Natural killer cell (primary cell): ENCODE measurements at regions of chr7 and their contacts with region 1.

Region 1: DNA sequence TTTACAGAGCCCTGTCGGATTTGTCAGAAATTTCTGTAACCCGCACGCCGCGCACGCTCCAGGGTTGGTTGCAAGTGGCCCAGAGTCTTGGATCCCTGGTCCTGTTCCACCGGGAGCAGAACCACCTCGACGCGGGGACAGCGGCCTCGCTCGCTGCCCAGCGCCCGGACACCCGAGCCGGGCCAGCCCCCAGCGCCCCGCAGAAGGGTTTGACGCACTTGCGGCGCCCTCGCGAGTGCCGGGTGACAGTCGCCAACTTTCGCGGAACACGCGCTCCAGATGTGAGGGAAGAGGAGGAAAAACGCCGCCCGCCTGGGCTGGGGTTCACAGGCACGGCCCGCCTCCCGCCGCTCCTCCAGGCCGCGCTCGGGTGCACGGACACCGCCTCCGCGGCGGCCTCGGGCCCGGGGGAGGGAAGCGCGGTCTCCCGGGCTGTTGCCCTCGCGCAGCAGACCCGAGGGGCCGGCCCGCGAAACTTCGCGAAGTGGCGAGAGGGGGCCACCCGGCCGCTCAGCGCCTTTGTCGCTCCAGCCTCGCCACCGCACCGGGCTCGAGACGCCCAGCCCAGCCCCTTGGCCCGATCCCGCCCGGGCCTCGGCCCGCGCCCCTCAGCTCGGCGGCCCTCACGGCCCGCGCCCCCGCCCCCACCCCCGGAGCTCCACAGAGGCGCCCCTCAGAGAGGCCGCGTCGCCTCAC is 514 bp downstream of the RNF216 start:
- DNase-seq: peak in 1 of 2 donors; percentile 54
- ATAC-seq: peak; percentile 31 to 49 (median 40)
- H3K4me3 ChIP-seq: peak overlapping the region; percentile 55
- H3K4me3 Mint-ChIP-seq: peak overlapping the region; percentile 92
- H3K27ac ChIP-seq: peak overlapping the region; percentile 79
- H3K27ac Mint-ChIP-seq: peak overlapping the region; percentile 80 to 93
- H3K4me1 ChIP-seq: peaks cover 31% of the 10 kb centered on the region
- H3K4me1 Mint-ChIP-seq: peaks cover 29 to 33% of the 10 kb centered on the region in 2 donors
- H3K27me3 ChIP-seq: no peaks in the 10 kb centered on the region
- H3K27me3 Mint-ChIP-seq: no peaks in the 10 kb centered on the region
- CTCF ChIP-seq: no peak

Region 2: DNA sequence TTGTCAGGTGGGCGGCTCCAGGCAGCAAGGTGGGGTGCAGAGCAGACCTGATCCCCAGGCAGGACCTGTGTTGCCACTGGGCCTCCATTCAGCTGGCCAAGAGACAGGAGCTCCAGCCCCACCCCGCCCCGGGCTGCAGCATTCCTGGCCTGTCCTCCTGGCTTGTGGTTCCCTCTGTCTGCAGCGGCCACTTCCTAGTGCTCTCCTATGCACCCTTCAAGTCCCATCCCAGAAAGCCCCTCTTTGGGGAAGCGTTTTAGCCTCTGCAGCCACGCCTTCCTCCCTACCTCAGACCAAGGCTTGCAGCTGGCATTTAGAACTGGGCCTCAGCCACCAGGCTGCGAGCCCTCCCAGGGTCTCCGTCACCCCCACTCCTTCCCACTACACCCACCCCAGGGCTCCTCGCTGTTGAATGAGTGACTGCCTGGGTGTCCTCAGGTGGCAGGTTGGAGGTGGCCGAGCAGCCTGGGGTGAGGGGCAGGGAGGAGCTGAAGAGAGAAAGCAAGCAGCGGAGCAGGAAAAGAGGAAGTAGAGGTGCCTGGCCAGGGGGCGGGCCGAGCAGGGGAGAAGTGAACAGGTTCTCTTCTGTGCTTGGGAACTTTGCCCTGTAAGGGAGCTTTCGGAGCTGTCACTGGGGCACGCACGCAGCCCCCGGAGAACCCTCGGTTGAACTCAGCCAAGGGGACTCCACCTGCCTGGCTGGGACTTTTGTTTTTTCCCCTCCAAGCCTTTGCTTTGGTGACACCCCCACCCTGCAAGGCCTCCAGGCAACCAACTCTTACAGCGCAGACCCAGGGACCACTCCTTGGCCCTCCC is 248.2 kb before region 1 on chr7:
- intact Hi-C with region 1: no loop called
- DNase-seq: peak in 1 of 2 donors; percentile 69
- ATAC-seq: no peak
- H3K4me3 ChIP-seq: peak overlapping the region; percentile 83
- H3K4me3 Mint-ChIP-seq: peak overlapping the region; percentile 97
- H3K27ac ChIP-seq: peak overlapping the region; percentile 78
- H3K27ac Mint-ChIP-seq: peak overlapping the region; percentile 95
- H3K4me1 ChIP-seq: peaks cover 47% of the 10 kb centered on the region
- H3K4me1 Mint-ChIP-seq: peaks cover 36 to 46% of the 10 kb centered on the region in 2 donors
- H3K27me3 ChIP-seq: no peaks in the 10 kb centered on the region
- H3K27me3 Mint-ChIP-seq: no peaks in the 10 kb centered on the region
- CTCF ChIP-seq: no peak

Region 3: DNA sequence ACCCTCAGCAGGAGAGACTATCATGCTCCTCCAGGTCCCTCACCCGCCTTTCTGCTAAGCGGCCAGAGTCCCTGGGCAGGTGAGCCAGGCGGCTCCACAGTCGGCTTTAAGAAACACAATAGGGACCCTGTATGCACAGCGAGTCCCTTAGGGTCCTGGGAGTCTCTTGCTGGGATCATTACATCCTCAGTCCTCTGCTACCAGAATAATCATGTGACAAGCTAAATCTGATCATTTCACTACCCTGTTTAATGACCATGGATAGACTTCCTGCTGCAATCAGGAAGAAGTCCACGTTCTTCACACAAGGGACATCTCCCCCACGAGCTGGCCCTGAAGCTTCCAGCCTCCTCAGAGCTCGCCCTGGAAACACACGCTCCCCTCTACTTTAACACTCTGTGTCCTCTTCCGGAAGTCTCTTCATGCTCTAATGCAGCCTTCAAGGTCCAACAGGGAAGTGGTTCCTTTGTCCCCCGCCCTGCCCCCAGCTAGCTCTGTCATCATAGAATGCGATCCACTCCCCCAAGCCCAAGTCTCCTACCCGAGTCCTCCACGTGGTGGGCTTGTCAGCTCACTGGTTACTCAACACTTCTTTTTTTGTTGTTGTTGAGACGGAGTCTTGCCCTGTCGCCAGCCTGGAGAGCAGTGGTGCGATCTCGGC is 101.0 kb before region 1 on chr7:
- intact Hi-C with region 1: no loop called
- DNase-seq: no peak
- ATAC-seq: no peak
- H3K4me3 ChIP-seq: no peak overlapping the region
- H3K4me3 Mint-ChIP-seq: no peak overlapping the region
- H3K27ac ChIP-seq: peak overlapping the region; percentile 10
- H3K27ac Mint-ChIP-seq: peak overlapping the region in 1 of 2 donors; percentile 52
- H3K4me1 ChIP-seq: peaks cover 41% of the 10 kb centered on the region
- H3K4me1 Mint-ChIP-seq: peaks cover 25 to 37% of the 10 kb centered on the region in 2 donors
- H3K27me3 ChIP-seq: no peaks in the 10 kb centered on the region
- H3K27me3 Mint-ChIP-seq: no peaks in the 10 kb centered on the region
- CTCF ChIP-seq: no peak

Region 4: DNA sequence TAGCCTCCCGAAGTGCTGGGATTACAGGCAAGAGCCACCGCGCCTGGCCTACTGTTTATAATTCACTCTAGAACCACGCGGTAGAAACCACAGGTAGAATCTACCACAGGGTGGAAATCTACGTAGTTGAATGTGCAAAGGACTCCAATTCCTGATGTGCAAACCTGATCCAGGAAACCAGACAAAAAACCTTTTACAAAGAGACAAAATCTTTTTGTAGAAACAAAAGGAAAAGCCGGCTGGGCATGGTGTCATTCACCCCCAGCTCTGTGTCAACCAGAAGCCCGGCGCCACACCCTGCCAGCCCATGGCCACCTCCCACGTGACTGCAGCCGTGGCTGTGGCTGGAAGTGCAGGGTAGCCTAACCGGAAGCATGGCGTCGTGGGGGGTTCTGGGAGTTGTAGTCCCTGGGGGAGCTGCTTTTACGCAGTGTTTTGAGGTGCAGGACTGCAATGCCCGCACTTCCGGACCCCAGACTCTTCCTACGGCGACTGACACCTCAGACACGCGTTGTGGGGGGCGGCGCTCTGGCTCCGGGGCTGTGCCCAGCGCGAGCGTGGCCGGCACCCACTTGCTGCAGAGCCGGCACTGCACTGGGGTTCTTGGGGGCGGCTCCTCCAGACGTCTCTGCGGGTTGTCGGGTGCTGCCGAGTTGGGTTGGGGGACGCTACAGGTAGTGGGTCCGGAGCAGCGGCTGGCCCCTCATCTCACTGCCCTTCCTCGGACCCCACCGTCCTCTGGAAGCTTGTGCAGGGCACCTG is 42.0 kb after region 1 on chr7:
- intact Hi-C with region 1: loop called (anchors 2 kb)
- DNase-seq: peak; percentile 92 to 98
- ATAC-seq: peak; percentile 96 to 100 (median 97)
- H3K4me3 ChIP-seq: peak overlapping the region; percentile 66
- H3K4me3 Mint-ChIP-seq: peak overlapping the region; percentile 87
- H3K27ac ChIP-seq: peak overlapping the region; percentile 89
- H3K27ac Mint-ChIP-seq: peak overlapping the region; percentile 87 to 90
- H3K4me1 ChIP-seq: peaks cover 19% of the 10 kb centered on the region
- H3K4me1 Mint-ChIP-seq: peaks cover 12 to 15% of the 10 kb centered on the region in 2 donors
- H3K27me3 ChIP-seq: no peaks in the 10 kb centered on the region
- H3K27me3 Mint-ChIP-seq: no peaks in the 10 kb centered on the region
- CTCF ChIP-seq: no peak

Region 5: DNA sequence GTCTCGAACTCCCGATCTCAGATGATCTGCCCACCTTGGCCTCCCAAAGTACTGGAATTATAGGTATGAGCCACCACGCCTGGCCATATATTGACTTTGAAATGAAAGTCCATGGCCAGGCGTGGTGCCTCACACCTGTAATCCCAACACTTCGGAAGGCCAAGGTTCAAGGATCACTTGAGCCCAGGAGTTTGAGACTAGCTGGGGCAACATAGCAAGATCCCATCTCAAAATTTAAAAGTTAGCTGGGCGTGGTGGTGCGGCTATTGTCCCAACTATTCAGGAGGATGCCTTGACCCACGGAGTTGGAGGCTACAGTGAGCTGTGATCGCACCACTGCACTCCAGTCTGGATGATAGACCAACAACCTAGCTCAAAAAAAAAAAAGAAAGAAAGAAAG is 111.5 kb after region 1 on chr7:
- intact Hi-C with region 1: no loop called
- DNase-seq: no peak
- ATAC-seq: no peak
- H3K4me3 ChIP-seq: no peak overlapping the region
- H3K4me3 Mint-ChIP-seq: no peak overlapping the region
- H3K27ac ChIP-seq: no peak overlapping the region
- H3K27ac Mint-ChIP-seq: no peak overlapping the region
- H3K4me1 ChIP-seq: no peaks in the 10 kb centered on the region
- H3K4me1 Mint-ChIP-seq: no peaks in the 10 kb centered on the region
- H3K27me3 ChIP-seq: no peaks in the 10 kb centered on the region
- H3K27me3 Mint-ChIP-seq: no peaks in the 10 kb centered on the region
- CTCF ChIP-seq: no peak